Thyroid gland (tissue), 4 donors: ENCODE measurements at regions of chr1 and their contacts with region 1.

Region 1: GRCh38 chr1:214328770-214329469 is 48.0 kb downstream of the SMYD2 start:
- DNase-seq: peak; percentile 86 to 90
- H3K4me3 ChIP-seq: no peak overlapping the region
- H3K27ac ChIP-seq: peak overlapping the region; percentile 80 to 91 (median 89)
- H3K4me1 ChIP-seq: peaks cover 24 to 26% of the 10 kb centered on the region in 2 donors
- H3K27me3 ChIP-seq: no peaks in the 10 kb centered on the region
- CTCF ChIP-seq: peak; percentile 63 to 97 (median 92)
- POLR2A ChIP-seq: no peak

Region 2: DNA sequence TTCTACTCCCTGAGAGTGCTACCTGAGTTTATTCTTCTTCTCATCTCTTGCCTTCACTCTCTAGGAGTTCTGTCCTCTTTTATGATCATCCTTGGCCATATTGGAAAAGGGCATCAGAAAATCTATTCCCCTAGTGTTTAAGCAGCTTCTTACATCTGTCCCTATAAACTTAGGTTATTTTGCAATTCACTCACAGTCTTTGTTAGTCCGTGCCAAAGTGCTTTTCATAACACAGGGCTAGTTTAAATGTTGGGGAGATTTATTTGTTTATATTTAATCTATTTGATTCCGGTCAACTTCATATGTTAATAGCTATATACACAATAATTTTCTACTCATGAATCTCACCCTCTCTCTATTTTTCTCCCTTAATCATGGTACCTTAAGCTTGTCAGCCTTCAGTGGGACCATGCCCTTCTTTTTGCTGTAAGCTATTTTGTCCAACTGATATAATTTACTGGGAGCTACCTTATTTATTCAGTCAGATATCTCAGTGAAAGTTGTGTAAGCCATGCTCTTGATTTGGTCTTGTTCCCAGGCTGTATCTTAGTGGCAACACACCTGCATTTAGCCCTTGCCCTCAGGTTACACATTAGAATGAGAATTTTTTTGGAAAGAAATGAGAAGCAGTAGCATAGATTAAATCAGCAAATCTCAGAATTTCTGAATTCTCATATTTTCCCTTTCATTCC is 154.3 kb before region 1 on chr1:
- intact Hi-C with region 1: no loop called
- DNase-seq: no peak
- H3K4me3 ChIP-seq: no peak overlapping the region
- H3K27ac ChIP-seq: no peak overlapping the region
- H3K4me1 ChIP-seq: peaks cover 4 to 15% of the 10 kb centered on the region in 2 donors
- H3K27me3 ChIP-seq: no peaks in the 10 kb centered on the region
- CTCF ChIP-seq: no peak
- POLR2A ChIP-seq: no peak

Region 3: DNA sequence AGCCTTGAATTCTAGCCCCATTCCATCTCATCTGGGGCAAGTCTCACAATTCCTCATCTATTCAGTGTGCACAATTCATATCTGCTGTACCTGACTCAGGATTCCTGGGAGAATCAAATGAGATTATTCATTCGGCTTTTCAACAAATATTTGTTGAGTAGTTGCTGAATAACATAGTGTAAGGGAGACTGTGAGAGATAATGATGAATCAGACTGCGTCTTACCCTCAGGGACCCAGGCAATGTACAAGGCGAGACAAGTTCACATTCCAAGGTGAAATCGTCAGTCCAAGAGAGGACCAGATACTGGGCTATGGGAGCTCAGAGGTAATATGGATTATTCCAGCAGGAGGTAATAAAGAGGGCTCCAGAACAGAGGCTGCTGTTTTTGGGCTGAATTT is 115.8 kb before region 1 on chr1:
- intact Hi-C with region 1: loop called (anchors 5 kb)
- DNase-seq: no peak
- H3K4me3 ChIP-seq: no peak overlapping the region
- H3K27ac ChIP-seq: no peak overlapping the region
- H3K4me1 ChIP-seq: peaks cover 0 to 4% of the 10 kb centered on the region in 2 donors
- H3K27me3 ChIP-seq: no peaks in the 10 kb centered on the region
- CTCF ChIP-seq: no peak
- POLR2A ChIP-seq: no peak

Region 4: DNA sequence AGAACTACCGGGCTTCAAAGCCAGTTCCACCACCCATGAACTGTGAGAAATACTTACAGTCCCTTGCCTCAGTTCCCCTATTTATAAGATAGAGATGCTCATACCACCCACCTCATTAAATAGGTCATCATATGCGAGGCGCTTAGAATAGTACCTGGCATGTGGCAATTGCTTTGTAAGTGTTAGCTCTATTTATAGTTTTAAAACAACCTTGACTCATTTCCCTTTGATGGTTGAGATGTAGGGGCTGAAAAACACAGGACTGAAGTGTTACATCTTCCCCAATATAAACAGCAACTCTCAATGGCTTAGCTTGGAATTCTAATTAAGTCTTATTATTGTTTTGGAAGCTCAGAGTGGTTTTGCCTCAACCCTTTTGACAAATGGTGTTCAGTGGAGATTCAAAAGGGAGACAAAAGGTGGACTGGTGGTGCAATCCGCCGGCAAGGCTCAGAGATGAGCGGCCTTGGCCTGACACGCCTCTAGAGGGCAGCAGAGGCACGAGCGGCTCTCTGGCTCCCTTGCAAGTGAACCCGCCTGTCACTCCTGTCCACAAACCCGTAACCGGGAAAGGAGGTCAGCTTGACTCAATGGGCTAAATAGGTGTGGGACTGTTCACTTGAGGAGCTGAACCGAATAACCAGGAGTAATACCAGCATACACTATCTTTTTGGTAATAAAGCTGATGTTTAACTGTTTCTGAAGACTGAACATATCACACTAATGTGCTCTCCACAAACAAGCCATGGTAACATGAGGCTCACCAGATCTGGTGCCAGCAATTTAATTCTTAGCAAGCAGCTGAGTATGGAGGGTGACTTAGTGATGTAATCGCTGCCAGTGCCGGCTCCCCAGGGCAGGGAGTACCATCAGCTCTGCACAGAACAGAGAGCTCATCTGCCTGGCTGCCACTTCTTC is 67.5 kb before region 1 on chr1:
- intact Hi-C with region 1: loop called (anchors 2 kb)
- DNase-seq: peak; percentile 86 to 91
- H3K4me3 ChIP-seq: no peak overlapping the region
- H3K27ac ChIP-seq: no peak overlapping the region
- H3K4me1 ChIP-seq: no peaks in the 10 kb centered on the region
- H3K27me3 ChIP-seq: no peaks in the 10 kb centered on the region
- CTCF ChIP-seq: peak; percentile 66 to 95 (median 90)
- POLR2A ChIP-seq: no peak

Region 5: GRCh38 chr1:214584805-214585766 is 256.2 kb after region 1 on chr1:
- intact Hi-C with region 1: loop called (anchors 5 kb)
- DNase-seq: no peak
- H3K4me3 ChIP-seq: no peak overlapping the region
- H3K27ac ChIP-seq: no peak overlapping the region
- H3K4me1 ChIP-seq: no peaks in the 10 kb centered on the region
- H3K27me3 ChIP-seq: no peaks in the 10 kb centered on the region
- CTCF ChIP-seq: peak; percentile 58 to 96 (median 71)
- POLR2A ChIP-seq: no peak